ENCODE measurements at regions of chr7 and their contacts with region 1.

Region 1: GRCh38 chr7:22934473-22935065 is 79.4 kb downstream of the HYCC1 start:
- DNase-seq: peak; percentile 24
- H3K4me3 ChIP-seq: no peak overlapping the region
- H3K27ac ChIP-seq: no peak overlapping the region
- H3K4me1 ChIP-seq: peaks cover 8% of the 10 kb centered on the region
- H3K27me3 ChIP-seq: no peaks in the 10 kb centered on the region
- CTCF ChIP-seq: no peak

Region 2: DNA sequence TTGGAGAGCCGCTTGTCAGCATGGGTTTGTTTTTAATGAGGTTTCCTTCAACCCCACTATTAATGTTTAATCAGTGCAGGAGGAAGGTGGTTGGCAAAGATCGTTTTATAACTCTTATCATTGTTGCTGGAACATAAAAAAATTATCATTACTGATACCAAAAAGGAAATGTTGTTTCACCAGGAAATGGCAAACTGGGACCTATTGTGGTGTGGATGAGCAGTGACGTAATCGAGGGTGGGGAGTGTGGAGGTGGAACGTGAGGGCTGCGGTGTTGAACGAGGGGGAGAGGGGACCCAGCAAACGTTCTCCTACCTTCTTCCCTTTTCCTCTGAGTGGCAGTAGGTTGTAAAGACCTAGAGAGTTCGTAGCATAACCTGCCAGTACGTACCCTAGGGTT is 40.0 kb before region 1 on chr7:
- CTCF ChIA-PET with region 1: no interaction called
- dilution Hi-C with region 1: loop called (anchors 5 kb)
- in situ Hi-C with region 1: no loop called
- intact Hi-C with region 1: no loop called
- DNase-seq: no peak
- H3K4me3 ChIP-seq: no peak overlapping the region
- H3K27ac ChIP-seq: no peak overlapping the region
- H3K4me1 ChIP-seq: no peaks in the 10 kb centered on the region
- H3K27me3 ChIP-seq: no peaks in the 10 kb centered on the region
- CTCF ChIP-seq: no peak

Region 3: DNA sequence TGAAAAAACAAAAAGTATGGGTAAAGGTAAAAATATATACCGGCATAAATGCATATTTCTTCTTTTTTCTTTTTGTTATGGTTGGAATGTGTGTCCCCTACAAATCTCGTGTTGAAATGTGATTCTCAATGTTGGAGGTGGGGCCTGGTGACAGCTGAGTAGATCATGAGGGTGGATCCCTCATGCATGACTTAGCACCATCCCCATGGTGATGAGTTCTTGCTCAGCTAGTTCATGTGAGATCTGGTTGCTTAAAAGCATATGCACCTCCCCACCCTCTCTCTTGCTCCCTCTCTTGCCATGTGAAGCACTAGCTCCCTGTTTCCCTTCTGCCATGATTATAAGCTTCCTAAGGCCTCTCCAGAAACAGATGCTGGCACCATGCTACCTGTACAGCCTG is 13.9 kb before region 1 on chr7:
- CTCF ChIA-PET with region 1: no interaction called
- dilution Hi-C with region 1: no loop called
- in situ Hi-C with region 1: no loop called
- intact Hi-C with region 1: no loop called
- DNase-seq: peak; percentile 24
- H3K4me3 ChIP-seq: no peak overlapping the region
- H3K27ac ChIP-seq: no peak overlapping the region
- H3K4me1 ChIP-seq: no peaks in the 10 kb centered on the region
- H3K27me3 ChIP-seq: no peaks in the 10 kb centered on the region
- CTCF ChIP-seq: no peak

Region 4: DNA sequence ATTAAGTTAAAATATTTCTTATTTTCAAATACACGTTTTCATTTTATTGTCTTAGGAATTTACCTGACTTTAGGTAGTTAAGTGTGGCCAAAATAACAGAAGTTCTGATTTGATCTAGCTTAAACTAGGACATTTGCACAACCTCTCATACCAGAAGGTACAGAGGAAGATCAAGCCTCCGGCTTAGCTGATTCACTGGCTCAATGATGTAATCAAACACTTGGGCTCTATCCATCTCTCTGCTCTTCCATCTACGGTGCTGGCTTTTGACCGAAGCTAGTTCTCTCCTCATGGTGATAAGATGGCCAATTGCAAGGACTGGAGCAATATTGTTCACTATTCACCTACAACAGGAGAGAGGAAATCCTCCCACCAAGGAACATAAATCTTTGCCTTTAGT is 91.6 kb after region 1 on chr7:
- CTCF ChIA-PET with region 1: no interaction called
- dilution Hi-C with region 1: loop called (anchors 5 kb)
- in situ Hi-C with region 1: no loop called
- intact Hi-C with region 1: no loop called
- DNase-seq: no peak
- H3K4me3 ChIP-seq: no peak overlapping the region
- H3K27ac ChIP-seq: no peak overlapping the region
- H3K4me1 ChIP-seq: peaks cover 15% of the 10 kb centered on the region
- H3K27me3 ChIP-seq: no peaks in the 10 kb centered on the region
- CTCF ChIP-seq: no peak

Region 5: GRCh38 chr7:23055582-23056178 is 121.1 kb after region 1 on chr7:
- CTCF ChIA-PET with region 1: no interaction called
- dilution Hi-C with region 1: no loop called
- in situ Hi-C with region 1: no loop called
- intact Hi-C with region 1: loop called (anchors 1 kb)
- DNase-seq: peak; percentile 57
- H3K4me3 ChIP-seq: no peak overlapping the region
- H3K27ac ChIP-seq: no peak overlapping the region
- H3K4me1 ChIP-seq: peaks cover 2% of the 10 kb centered on the region
- H3K27me3 ChIP-seq: no peaks in the 10 kb centered on the region
- CTCF ChIP-seq: peak; percentile 94 to 95